Posterior vena cava (tissue), 2 donors: ENCODE measurements at regions of chr15 and their contacts with region 1.

Region 1: GRCh38 chr15:74835307-74835823 is 7.6 kb downstream of the ULK3 start:
- DNase-seq: peak; percentile 86

Region 2: GRCh38 chr15:75171408-75171807 is 336.0 kb after region 1 on chr15:
- intact Hi-C with region 1: loop called in 1 of 2 experiments (anchors 5 kb)
- DNase-seq: peak; percentile 58